ENCODE measurements at regions of chr4 and their contacts with region 1.

Region 1: GRCh38 chr4:76148142-76148865 is at the start of gene NUP54:
- DNase-seq: peak; percentile 92 to 94 (median 93)
- H3K4me3 ChIP-seq: peak within 1 kb of the TSS; percentile 54 to 88
- H3K4me3 Mint-ChIP-seq: peak within 1 kb of the TSS; percentile 92 to 100 (median 98)
- H3K27ac ChIP-seq: peak within 1 kb of the TSS; percentile 88
- H3K27ac Mint-ChIP-seq: peak within 1 kb of the TSS; percentile 84 to 100 (median 98)
- H3K4me1 ChIP-seq: peaks cover 34% of the 10 kb centered on the region
- H3K4me1 Mint-ChIP-seq: peaks cover 21 to 46% (median 34%) of the 10 kb centered on the region in 4 donors
- H3K27me3 ChIP-seq: no peaks in the 10 kb centered on the region
- H3K27me3 Mint-ChIP-seq: no peaks in the 10 kb centered on the region
- total RNA-seq, gene NUP54: 49.3 to 52.8 TPM

Region 2: GRCh38 chr4:75940692-75941253 is 207.5 kb before region 1 on chr4 and contains the start of gene NAAA:
- CTCF ChIA-PET with region 1: no interaction called
- POLR2A ChIA-PET with region 1: interaction called, 13 read pairs
- intact Hi-C with region 1: loop called (anchors 1 kb)
- DNase-seq: peak; percentile 73 to 84 (median 80)
- H3K4me3 ChIP-seq: peak within 1 kb of the TSS; percentile 80 to 98
- H3K4me3 Mint-ChIP-seq: peak within 1 kb of the TSS; percentile 97 to 99 (median 98)
- H3K27ac ChIP-seq: peak within 1 kb of the TSS; percentile 75
- H3K27ac Mint-ChIP-seq: peak within 1 kb of the TSS; percentile 96 to 98 (median 98)
- H3K4me1 ChIP-seq: peaks cover 19% of the 10 kb centered on the region
- H3K4me1 Mint-ChIP-seq: peaks cover 10 to 35% (median 19%) of the 10 kb centered on the region in 4 donors
- H3K27me3 ChIP-seq: no peaks in the 10 kb centered on the region
- H3K27me3 Mint-ChIP-seq: no peaks in the 10 kb centered on the region
- total RNA-seq, gene NAAA: 86.1 to 92.2 TPM

Region 3: DNA sequence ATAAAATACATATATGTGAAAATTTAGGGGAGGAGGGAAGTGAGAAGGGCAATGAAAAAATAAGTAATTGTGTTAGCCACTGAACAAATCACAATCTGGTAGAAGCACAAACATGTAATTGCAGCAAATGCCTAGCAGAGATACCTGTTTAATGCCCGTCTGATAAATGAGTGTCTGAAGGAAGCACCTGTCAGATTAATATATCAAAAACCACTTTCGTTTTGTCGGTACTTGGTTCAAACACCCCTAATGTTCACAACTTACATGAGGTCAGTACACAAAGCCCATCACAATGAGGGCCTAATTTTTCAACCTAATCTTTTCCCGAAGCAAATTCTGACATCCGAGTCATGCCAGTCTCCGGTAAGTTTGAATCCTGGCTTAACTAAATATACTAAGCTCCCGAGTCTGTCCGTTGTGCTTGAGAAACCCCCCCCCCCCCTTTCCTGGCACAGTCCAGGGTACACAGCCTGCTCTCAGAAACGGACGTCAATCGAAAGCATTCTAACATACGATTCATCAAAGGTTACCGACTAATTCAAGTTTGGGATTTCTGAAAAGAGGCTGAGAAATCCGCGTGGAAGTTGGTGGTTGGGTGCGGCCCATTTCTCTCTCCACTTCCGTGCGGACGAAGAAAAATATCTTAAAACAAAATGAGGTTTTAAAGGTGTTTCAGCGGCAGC is 158.3 kb before region 1 on chr4:
- CTCF ChIA-PET with region 1: interaction called, 15 read pairs
- POLR2A ChIA-PET with region 1: interaction called, 7 read pairs
- intact Hi-C with region 1: loop called (anchors 1 kb)
- DNase-seq: peak in 4 of 5 donors; percentile 3 to 14 (median 8)
- H3K4me3 ChIP-seq: peak overlapping the region; percentile 84 to 93
- H3K4me3 Mint-ChIP-seq: peak overlapping the region; percentile 95 to 98 (median 96)
- H3K27ac ChIP-seq: peak overlapping the region; percentile 70
- H3K27ac Mint-ChIP-seq: peak overlapping the region; percentile 92 to 97 (median 95)
- H3K4me1 ChIP-seq: peaks cover 53% of the 10 kb centered on the region
- H3K4me1 Mint-ChIP-seq: peaks cover 0 to 34% (median 20%) of the 10 kb centered on the region in 4 donors
- H3K27me3 ChIP-seq: no peaks in the 10 kb centered on the region
- H3K27me3 Mint-ChIP-seq: peaks cover 0 to 5% of the 10 kb centered on the region in 2 donors

Region 4: DNA sequence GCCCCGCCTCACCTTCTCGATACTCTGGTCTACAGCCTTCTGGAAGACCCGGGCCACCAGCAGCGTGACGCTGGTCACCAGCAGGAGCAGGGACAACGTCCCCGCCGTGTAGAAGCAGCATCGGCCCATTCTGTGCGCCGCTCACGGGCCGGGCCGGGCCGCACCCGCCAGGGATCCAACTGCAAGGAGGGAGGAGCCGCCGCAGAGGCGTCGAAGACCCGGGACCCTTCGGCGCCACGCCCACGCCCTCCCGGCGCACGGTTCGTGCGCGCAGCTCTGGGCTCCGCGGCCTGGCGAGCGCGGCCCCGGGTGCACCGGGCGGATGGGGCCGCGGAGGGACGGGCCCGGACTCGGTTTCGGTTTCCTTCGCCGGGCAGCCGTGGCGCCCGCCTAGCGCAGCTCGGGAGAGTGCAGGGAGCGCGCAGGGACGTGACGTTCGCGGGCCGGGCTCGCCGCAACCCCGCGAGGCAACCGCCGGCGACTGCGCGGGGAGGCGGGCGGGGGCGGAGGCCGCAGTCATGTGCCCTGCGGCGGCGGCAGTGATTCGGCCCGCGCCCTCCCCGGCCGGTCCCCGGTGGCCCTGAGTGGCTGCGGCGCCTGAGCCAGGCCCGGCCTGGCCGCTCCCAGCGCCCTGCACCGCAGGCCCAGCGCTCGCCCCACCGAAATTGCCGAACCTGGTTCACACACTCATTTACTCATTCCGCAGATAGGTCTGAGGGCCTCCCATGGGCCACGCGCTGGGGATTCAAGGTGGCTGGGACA is 65.3 kb after region 1 on chr4 and contains the start of gene SCARB2:
- CTCF ChIA-PET with region 1: no interaction called
- POLR2A ChIA-PET with region 1: interaction called, 7 read pairs
- intact Hi-C with region 1: loop called (anchors 1 kb)
- DNase-seq: peak; percentile 79 to 88 (median 83)
- H3K4me3 ChIP-seq: peak within 1 kb of the TSS; percentile 77 to 90
- H3K4me3 Mint-ChIP-seq: peak within 1 kb of the TSS; percentile 89 to 97 (median 96)
- H3K27ac ChIP-seq: peak within 1 kb of the TSS; percentile 84
- H3K27ac Mint-ChIP-seq: peak within 1 kb of the TSS; percentile 92 to 98 (median 98)
- H3K4me1 ChIP-seq: peaks cover 43% of the 10 kb centered on the region
- H3K4me1 Mint-ChIP-seq: peaks cover 39 to 72% (median 48%) of the 10 kb centered on the region in 4 donors
- H3K27me3 ChIP-seq: no peaks in the 10 kb centered on the region
- H3K27me3 Mint-ChIP-seq: no peaks in the 10 kb centered on the region
- total RNA-seq, gene SCARB2: 23.3 to 23.5 TPM

Region 5: DNA sequence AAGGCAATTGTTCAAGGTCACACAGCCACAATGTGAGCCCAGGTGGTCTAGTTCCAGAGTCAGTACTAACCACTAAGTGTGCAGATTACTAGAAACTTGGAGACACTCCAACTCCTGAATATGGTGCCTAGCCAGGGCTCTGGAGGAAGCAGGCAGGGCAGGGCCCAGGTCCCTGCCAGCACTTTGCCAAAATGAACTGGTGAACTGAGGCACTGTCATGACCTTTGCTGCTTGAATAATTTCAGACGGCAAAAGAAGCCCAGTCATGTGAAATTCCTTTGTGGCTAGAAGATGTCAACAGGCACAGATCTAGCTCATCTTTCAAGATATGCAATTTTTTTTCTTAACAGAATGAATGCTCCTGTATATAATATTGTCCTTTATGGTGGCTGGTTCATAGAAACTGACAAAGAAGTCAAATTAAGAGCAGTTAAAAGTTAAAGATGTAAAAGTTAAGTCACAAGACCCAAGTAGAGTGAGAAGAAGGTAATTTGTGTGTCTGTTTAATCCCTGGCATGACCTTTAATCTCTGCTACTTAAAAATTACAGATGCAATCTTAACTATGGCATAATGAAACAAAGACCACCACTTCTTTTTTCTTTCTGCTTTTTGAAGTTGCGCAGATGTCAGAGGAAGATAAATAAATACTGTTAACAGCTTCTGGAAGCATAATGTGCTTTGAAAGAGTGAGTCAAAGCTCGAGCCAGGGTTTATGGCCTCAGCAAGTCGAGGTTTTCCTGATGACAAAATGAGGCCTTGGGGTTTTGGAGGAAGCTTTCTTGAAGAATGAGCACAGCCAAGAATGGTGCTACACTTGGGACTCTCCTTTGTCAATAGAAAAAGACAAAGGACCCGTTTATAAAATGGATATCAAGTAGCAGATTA is 340.8 kb after region 1 on chr4:
- CTCF ChIA-PET with region 1: no interaction called
- POLR2A ChIA-PET with region 1: no interaction called
- intact Hi-C with region 1: no loop called
- DNase-seq: no peak
- H3K4me3 ChIP-seq: no peak overlapping the region
- H3K4me3 Mint-ChIP-seq: no peak overlapping the region
- H3K27ac ChIP-seq: no peak overlapping the region
- H3K27ac Mint-ChIP-seq: peak overlapping the region in 1 of 7 donors; percentile 48
- H3K4me1 ChIP-seq: no peaks in the 10 kb centered on the region
- H3K4me1 Mint-ChIP-seq: no peaks in the 10 kb centered on the region
- H3K27me3 ChIP-seq: no peaks in the 10 kb centered on the region
- H3K27me3 Mint-ChIP-seq: peaks cover 6 to 11% of the 10 kb centered on the region in 2 donors